Activated CD4-positive, alpha-beta memory T cell treated with anti-CD3 and anti-CD28 coated beads for 36 hours (primary cell): ENCODE measurements at regions of chr19 and their contacts with region 1.

Region 1: GRCh38 chr19:23772286-23773063 is 13.8 kb upstream of the ZNF681 start:
- DNase-seq: no peak
- H3K4me3 Mint-ChIP-seq: no peak overlapping the region
- H3K27ac Mint-ChIP-seq: peak overlapping the region; percentile 34
- H3K4me1 Mint-ChIP-seq: peaks cover 37% of the 10 kb centered on the region
- H3K27me3 Mint-ChIP-seq: no peaks in the 10 kb centered on the region

Region 2: GRCh38 chr19:23790641-23791488 is 18.4 kb after region 1 on chr19:
- CTCF ChIA-PET with region 1: no interaction called
- POLR2A ChIA-PET with region 1: no interaction called
- intact Hi-C with region 1: no loop called
- DNase-seq: no peak
- H3K4me3 Mint-ChIP-seq: no peak overlapping the region
- H3K27ac Mint-ChIP-seq: no peak overlapping the region
- H3K4me1 Mint-ChIP-seq: peaks cover 10% of the 10 kb centered on the region
- H3K27me3 Mint-ChIP-seq: no peaks in the 10 kb centered on the region

Region 3: GRCh38 chr19:23802290-23802689 is 29.8 kb after region 1 on chr19:
- CTCF ChIA-PET with region 1: no interaction called
- POLR2A ChIA-PET with region 1: no interaction called
- intact Hi-C with region 1: loop called (anchors 1 kb)
- DNase-seq: peak; percentile 28
- H3K4me3 Mint-ChIP-seq: peak overlapping the region; percentile 62
- H3K27ac Mint-ChIP-seq: peak overlapping the region; percentile 76
- H3K4me1 Mint-ChIP-seq: peaks cover 30% of the 10 kb centered on the region
- H3K27me3 Mint-ChIP-seq: no peaks in the 10 kb centered on the region

Region 4: GRCh38 chr19:23817519-23817918 is 45.0 kb after region 1 on chr19:
- CTCF ChIA-PET with region 1: no interaction called
- POLR2A ChIA-PET with region 1: no interaction called
- intact Hi-C with region 1: no loop called
- DNase-seq: peak; percentile 62
- H3K4me3 Mint-ChIP-seq: no peak overlapping the region
- H3K27ac Mint-ChIP-seq: no peak overlapping the region
- H3K4me1 Mint-ChIP-seq: no peaks in the 10 kb centered on the region
- H3K27me3 Mint-ChIP-seq: no peaks in the 10 kb centered on the region

Region 5: GRCh38 chr19:24062190-24062589 is 289.7 kb after region 1 on chr19:
- CTCF ChIA-PET with region 1: no interaction called
- POLR2A ChIA-PET with region 1: no interaction called
- intact Hi-C with region 1: loop called (anchors 2 kb)
- DNase-seq: no peak
- H3K4me3 Mint-ChIP-seq: no peak overlapping the region
- H3K27ac Mint-ChIP-seq: no peak overlapping the region
- H3K4me1 Mint-ChIP-seq: peaks cover 8% of the 10 kb centered on the region
- H3K27me3 Mint-ChIP-seq: no peaks in the 10 kb centered on the region